Activated CD4-positive, alpha-beta memory T cell treated with anti-CD3 and anti-CD28 coated beads for 36 hours (primary cell): ENCODE measurements at regions of chr3 and their contacts with region 1.

Region 1: DNA sequence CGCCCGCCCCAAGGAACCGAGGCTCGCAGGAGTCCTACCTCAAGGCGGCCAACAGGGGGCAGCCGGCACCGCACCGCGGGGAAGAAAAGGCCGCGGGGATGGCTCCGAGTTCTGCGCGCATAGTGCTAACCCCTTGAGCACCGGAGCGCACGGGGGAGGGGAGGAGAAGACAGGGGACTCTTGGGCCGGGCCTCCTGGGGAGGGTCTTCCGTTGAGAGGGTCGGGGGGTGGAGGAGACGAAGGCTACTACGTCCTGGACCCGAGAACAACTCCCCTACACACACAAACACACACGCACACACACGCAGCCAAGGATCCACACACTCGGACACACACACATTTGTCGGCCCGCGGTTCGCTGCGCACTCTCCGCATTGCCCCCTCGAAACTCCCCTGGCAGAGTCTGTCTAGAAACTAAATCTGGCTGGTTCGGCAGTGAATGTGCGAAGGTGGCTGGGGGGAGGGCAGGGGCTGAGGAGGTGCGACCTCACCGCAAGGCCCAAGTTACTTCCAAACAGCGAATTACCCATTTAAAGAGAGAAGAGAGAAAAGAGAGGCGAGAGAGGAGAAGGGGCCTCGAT is 1.8 kb downstream of the WNT5A start:
- DNase-seq: peak; percentile 59
- H3K4me3 Mint-ChIP-seq: no peak overlapping the region
- H3K27ac Mint-ChIP-seq: no peak overlapping the region
- H3K4me1 Mint-ChIP-seq: peaks cover 17% of the 10 kb centered on the region
- H3K27me3 Mint-ChIP-seq: peaks cover 77% of the 10 kb centered on the region

Region 2: GRCh38 chr3:55118453-55118852 is 366.8 kb before region 1 on chr3:
- CTCF ChIA-PET with region 1: no interaction called
- POLR2A ChIA-PET with region 1: no interaction called
- intact Hi-C with region 1: no loop called
- DNase-seq: no peak
- H3K4me3 Mint-ChIP-seq: no peak overlapping the region
- H3K27ac Mint-ChIP-seq: no peak overlapping the region
- H3K4me1 Mint-ChIP-seq: no peaks in the 10 kb centered on the region
- H3K27me3 Mint-ChIP-seq: no peaks in the 10 kb centered on the region

Region 3: GRCh38 chr3:55511895-55512570 is 26.7 kb after region 1 on chr3:
- CTCF ChIA-PET with region 1: no interaction called
- POLR2A ChIA-PET with region 1: no interaction called
- intact Hi-C with region 1: no loop called
- DNase-seq: no peak
- H3K4me3 Mint-ChIP-seq: no peak overlapping the region
- H3K27ac Mint-ChIP-seq: no peak overlapping the region
- H3K4me1 Mint-ChIP-seq: no peaks in the 10 kb centered on the region
- H3K27me3 Mint-ChIP-seq: peaks cover 1% of the 10 kb centered on the region

Region 4: GRCh38 chr3:55721716-55722484 is 236.6 kb after region 1 on chr3:
- CTCF ChIA-PET with region 1: interaction called, 3 read pairs
- POLR2A ChIA-PET with region 1: no interaction called
- intact Hi-C with region 1: loop called (anchors 10 kb)
- DNase-seq: no peak
- H3K4me3 Mint-ChIP-seq: no peak overlapping the region
- H3K27ac Mint-ChIP-seq: no peak overlapping the region
- H3K4me1 Mint-ChIP-seq: no peaks in the 10 kb centered on the region
- H3K27me3 Mint-ChIP-seq: no peaks in the 10 kb centered on the region

Region 5: GRCh38 chr3:56303487-56303886 is 818.2 kb after region 1 on chr3:
- CTCF ChIA-PET with region 1: no interaction called
- POLR2A ChIA-PET with region 1: no interaction called
- intact Hi-C with region 1: loop called (anchors 5 kb)
- DNase-seq: peak; percentile 29
- H3K4me3 Mint-ChIP-seq: no peak overlapping the region
- H3K27ac Mint-ChIP-seq: no peak overlapping the region
- H3K4me1 Mint-ChIP-seq: no peaks in the 10 kb centered on the region
- H3K27me3 Mint-ChIP-seq: peaks cover 4% of the 10 kb centered on the region